ENCODE measurements at regions of chr1 and their contacts with region 1.

Region 1: GRCh38 chr1:63674238-63674864 is 81.1 kb downstream of the PGM1 start:
- DNase-seq: peak; percentile 89
- H3K4me3 Mint-ChIP-seq: peak overlapping the region; percentile 2
- H3K27ac Mint-ChIP-seq: peak overlapping the region; percentile 62
- H3K4me1 Mint-ChIP-seq: peaks cover 53% of the 10 kb centered on the region
- H3K27me3 Mint-ChIP-seq: no peaks in the 10 kb centered on the region
- CTCF ChIP-seq: peak; percentile 69

Region 2: DNA sequence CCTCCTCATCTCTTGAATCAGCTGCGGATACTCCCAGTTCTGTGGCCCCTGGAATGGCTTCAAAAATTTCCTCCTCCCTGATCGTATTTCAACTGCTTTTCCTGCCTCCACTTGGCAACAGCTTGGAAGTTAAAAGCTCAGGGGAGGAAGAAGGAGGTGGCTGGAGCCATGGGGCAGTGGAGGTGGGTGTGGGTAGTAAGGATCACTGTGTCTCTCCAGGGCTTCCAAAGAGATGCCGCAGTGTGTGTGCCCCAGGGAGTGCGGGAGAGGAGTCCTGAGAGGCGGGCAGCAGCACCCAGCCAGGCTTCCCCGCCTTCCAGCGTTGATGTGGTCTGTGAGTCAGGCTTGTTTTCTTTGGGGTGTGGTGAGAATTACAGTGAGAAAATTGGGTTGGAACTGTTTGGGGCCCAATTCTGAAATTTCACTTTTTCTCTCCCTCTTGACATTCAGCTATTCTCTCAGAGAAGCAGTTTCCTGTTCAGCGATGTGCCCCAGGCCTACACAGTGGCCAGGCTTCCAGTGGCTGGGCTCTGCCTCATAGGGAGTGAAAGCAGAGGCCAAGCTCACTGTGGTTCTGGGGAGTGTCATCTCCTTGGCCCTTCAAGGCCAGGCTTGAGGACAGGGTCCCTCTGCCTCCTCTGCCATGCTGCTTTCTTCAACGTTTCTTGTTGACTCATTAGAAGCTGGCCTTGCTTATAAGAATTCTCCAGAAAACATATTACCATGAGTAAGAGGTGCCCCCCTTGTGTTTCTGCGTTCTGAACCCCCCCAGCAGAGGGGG is 12.1 kb before region 1 on chr1:
- CTCF ChIA-PET with region 1: interaction called, 18 read pairs
- intact Hi-C with region 1: loop called (anchors 1 kb)
- DNase-seq: peak; percentile 60
- H3K4me3 Mint-ChIP-seq: peak overlapping the region; percentile 50
- H3K27ac Mint-ChIP-seq: peak overlapping the region; percentile 99
- H3K4me1 Mint-ChIP-seq: peaks cover 59% of the 10 kb centered on the region
- H3K27me3 Mint-ChIP-seq: no peaks in the 10 kb centered on the region
- CTCF ChIP-seq: no peak

Region 3: DNA sequence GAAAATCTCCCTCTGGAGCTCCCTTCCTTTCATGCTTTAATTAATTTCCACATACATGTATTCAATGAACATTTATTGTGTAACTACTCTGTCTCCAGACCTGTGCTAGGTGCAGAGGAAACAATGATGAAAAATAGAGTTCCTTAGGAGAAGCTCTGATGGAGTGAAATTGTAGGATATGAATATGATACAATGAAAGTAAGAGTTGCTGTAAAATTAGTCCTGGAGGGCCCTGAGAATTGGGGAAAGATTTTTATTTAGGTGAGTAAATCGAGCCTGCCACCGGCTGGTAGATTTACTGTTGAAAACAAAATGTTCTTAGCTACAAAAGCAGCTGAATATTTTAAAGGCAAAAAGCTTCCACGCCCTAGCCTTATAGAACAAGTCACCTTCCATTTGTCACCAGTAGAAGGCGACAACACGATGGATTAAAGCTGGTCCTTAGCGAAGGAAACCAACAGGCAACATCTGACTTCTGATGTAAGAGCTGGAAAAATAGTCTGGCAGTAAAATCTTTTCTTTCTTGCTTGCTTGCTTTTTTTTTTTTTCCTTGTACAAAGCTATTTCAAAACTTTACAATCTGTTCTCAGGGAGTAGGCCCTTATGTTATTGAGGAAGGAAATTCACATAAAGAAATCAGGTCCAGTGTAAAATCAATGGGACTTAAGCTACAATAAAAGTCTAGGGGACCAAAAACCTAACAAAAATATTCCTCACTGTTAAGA is 17.5 kb after region 1 on chr1:
- CTCF ChIA-PET with region 1: interaction called, 45 read pairs
- intact Hi-C with region 1: no loop called
- DNase-seq: peak; percentile 70
- H3K4me3 Mint-ChIP-seq: no peak overlapping the region
- H3K27ac Mint-ChIP-seq: peak overlapping the region; percentile 53
- H3K4me1 Mint-ChIP-seq: peaks cover 49% of the 10 kb centered on the region
- H3K27me3 Mint-ChIP-seq: no peaks in the 10 kb centered on the region
- CTCF ChIP-seq: peak; percentile 67

Region 4: GRCh38 chr1:63698001-63698838 is 23.9 kb after region 1 on chr1:
- CTCF ChIA-PET with region 1: interaction called, 11 read pairs
- intact Hi-C with region 1: no loop called
- DNase-seq: peak; percentile 51
- H3K4me3 Mint-ChIP-seq: peak overlapping the region; percentile 11
- H3K27ac Mint-ChIP-seq: peak overlapping the region; percentile 72
- H3K4me1 Mint-ChIP-seq: peaks cover 89% of the 10 kb centered on the region
- H3K27me3 Mint-ChIP-seq: no peaks in the 10 kb centered on the region
- CTCF ChIP-seq: no peak

Region 5: DNA sequence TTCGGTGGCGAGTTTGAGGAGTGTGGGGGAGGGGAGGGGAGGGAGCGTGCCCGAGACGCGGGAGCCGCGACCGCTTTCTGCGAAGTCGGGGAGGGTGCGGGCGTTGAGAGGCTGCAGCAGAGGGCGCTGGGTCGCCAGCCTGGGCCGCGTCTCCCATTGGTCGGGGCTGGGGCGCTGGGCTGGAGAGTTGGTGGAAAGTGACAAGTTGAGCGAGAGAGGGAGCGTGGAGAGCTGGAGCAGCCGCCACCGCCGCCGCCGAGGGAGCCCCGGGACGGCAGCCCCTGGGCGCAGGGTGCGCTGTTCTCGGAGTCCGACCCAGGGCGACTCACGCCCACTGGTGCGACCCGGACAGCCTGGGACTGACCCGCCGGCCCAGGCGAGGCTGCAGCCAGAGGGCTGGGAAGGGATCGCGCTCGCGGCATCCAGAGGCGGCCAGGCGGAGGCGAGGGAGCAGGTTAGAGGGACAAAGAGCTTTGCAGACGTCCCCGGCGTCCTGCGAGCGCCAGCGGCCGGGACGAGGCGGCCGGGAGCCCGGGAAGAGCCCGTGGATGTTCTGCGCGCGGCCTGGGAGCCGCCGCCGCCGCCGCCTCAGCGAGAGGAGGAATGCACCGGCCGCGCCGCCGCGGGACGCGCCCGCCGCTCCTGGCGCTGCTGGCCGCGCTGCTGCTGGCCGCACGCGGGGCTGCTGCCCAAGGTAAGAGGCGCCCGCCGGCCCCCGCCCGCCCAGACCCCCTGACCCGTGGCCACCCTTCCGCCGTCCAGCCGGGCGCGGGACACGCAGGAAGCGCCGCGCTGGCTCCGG is 99.7 kb after region 1 on chr1 and contains the start of gene ROR1:
- CTCF ChIA-PET with region 1: interaction called, 11 read pairs
- intact Hi-C with region 1: no loop called
- DNase-seq: peak; percentile 94
- H3K4me3 Mint-ChIP-seq: peak within 1 kb of the TSS; percentile 99
- H3K27ac Mint-ChIP-seq: peak within 1 kb of the TSS; percentile 79
- H3K4me1 Mint-ChIP-seq: peaks cover 58% of the 10 kb centered on the region
- H3K27me3 Mint-ChIP-seq: no peaks in the 10 kb centered on the region
- CTCF ChIP-seq: peak; percentile 81
- total RNA-seq, gene ROR1: 24.5 and 33.8 TPM in 2 replicates

Region 6: GRCh38 chr1:63984257-63984929 is 310.0 kb after region 1 on chr1:
- CTCF ChIA-PET with region 1: no interaction called
- intact Hi-C with region 1: loop called (anchors 10 kb)
- DNase-seq: no peak
- H3K4me3 Mint-ChIP-seq: peak overlapping the region; percentile 13
- H3K27ac Mint-ChIP-seq: peak overlapping the region; percentile 43
- H3K4me1 Mint-ChIP-seq: peaks cover 77% of the 10 kb centered on the region
- H3K27me3 Mint-ChIP-seq: no peaks in the 10 kb centered on the region
- CTCF ChIP-seq: no peak

Region 7: GRCh38 chr1:64136752-64137411 is 462.5 kb after region 1 on chr1:
- CTCF ChIA-PET with region 1: interaction called, 10 read pairs
- intact Hi-C with region 1: loop called (anchors 1 kb)
- DNase-seq: peak; percentile 82
- H3K4me3 Mint-ChIP-seq: no peak overlapping the region
- H3K27ac Mint-ChIP-seq: no peak overlapping the region
- H3K4me1 Mint-ChIP-seq: peaks cover 20% of the 10 kb centered on the region
- H3K27me3 Mint-ChIP-seq: no peaks in the 10 kb centered on the region
- CTCF ChIP-seq: peak; percentile 86